ENCODE measurements at regions of chr1 and their contacts with region 1.

Region 1: GRCh38 chr1:24586970-24587820 is 31.3 kb downstream of the NCMAP start:
- DNase-seq: peak in 13 of 14 experiments; percentile 4 to 87 (median 48)
- ATAC-seq: peak; percentile 100
- H3K4me3 ChIP-seq: no peak overlapping the region
- H3K4me3 Mint-ChIP-seq: no peak overlapping the region
- H3K27ac ChIP-seq: no peak overlapping the region
- H3K27ac Mint-ChIP-seq: peak overlapping the region; percentile 66
- H3K4me1 ChIP-seq: peaks cover 3% of the 10 kb centered on the region
- H3K4me1 Mint-ChIP-seq: peaks cover 9% of the 10 kb centered on the region
- H3K27me3 ChIP-seq: no peaks in the 10 kb centered on the region
- H3K27me3 Mint-ChIP-seq: no peaks in the 10 kb centered on the region
- CTCF ChIP-seq: peak; percentile 86

Region 2: DNA sequence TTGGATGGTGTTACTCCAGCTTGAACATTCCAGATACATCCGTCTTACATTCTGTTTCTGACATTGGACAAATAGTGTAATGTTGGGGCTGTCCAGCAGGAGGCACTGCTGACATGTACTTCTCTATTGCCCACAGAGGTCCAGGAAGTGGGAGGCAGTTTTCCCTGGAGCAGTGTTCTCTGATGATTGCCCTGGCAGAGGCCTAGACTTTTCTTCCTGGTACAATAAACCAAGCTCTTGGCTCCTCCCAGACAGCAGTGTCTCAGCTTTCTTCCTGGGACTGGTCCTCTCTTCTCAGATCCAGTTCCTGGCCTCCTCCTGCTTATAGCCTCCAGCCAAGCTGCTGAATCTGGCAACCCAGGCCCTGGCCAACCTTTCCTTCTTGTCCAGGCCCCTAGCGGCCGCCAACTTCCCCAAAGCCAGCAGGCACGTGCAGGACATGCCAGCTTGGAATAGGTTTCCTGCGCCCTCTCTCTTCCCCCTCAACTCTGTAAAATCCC is 385.2 kb before region 1 on chr1:
- CTCF ChIA-PET with region 1: interaction called, 15 read pairs
- POLR2A ChIA-PET with region 1: no interaction called
- intact Hi-C with region 1: loop called (anchors 1 to 2 kb)
- DNase-seq: peak; percentile 30 to 76 (median 47)
- ATAC-seq: peak; percentile 43
- H3K4me3 ChIP-seq: no peak overlapping the region
- H3K4me3 Mint-ChIP-seq: no peak overlapping the region
- H3K27ac ChIP-seq: no peak overlapping the region
- H3K27ac Mint-ChIP-seq: no peak overlapping the region
- H3K4me1 ChIP-seq: peaks cover 8% of the 10 kb centered on the region
- H3K4me1 Mint-ChIP-seq: peaks cover 6% of the 10 kb centered on the region
- H3K27me3 ChIP-seq: peaks cover 0 to 8% of the 10 kb centered on the region in 2 experiments
- H3K27me3 Mint-ChIP-seq: no peaks in the 10 kb centered on the region
- CTCF ChIP-seq: peak; percentile 77

Region 3: DNA sequence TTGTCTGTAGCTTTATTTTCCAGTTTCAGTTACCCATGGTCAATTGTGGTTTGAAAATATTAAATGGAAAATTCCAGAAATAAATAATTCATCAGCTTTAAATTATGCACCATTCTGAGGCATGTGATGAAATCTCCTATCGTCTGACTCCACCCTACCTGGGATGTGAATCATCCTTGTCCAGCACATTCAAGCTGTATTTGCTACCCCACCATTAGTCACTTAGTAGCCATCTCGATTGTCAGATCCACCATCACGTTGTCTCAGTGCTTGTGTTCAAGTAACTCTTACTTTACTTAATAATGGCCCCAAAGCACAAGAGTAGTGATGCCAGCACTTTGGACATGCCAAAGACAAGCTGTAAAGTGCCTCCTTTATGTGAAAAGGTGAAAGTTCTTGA is 177.7 kb before region 1 on chr1:
- CTCF ChIA-PET with region 1: interaction called, 45 read pairs
- POLR2A ChIA-PET with region 1: interaction called, 8 read pairs
- intact Hi-C with region 1: no loop called
- DNase-seq: no peak
- ATAC-seq: no peak
- H3K4me3 ChIP-seq: no peak overlapping the region
- H3K4me3 Mint-ChIP-seq: no peak overlapping the region
- H3K27ac ChIP-seq: no peak overlapping the region
- H3K27ac Mint-ChIP-seq: no peak overlapping the region
- H3K4me1 ChIP-seq: peaks cover 14% of the 10 kb centered on the region
- H3K4me1 Mint-ChIP-seq: peaks cover 27% of the 10 kb centered on the region
- H3K27me3 ChIP-seq: no peaks in the 10 kb centered on the region
- H3K27me3 Mint-ChIP-seq: no peaks in the 10 kb centered on the region
- CTCF ChIP-seq: no peak

Region 4: DNA sequence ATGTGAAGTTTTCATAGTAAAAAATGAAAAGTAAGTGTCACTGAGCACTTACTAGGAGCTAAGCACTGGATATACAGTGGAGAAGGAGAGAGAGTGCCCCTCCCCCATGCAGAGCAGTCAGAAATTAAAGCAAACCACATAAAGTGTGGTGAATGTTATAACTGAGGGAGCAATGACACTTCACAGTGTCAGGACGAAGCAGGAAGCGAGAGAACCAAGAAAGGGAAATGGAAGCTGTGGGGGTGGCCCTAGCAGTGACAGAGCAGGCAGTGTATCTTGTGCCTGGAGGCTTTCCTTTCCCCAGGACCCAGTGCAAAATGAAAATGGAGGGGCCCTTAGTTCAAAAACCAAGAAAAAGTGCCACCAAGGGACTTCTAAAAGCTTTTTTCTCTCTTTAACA is 106.1 kb before region 1 on chr1:
- CTCF ChIA-PET with region 1: interaction called, 22 read pairs
- POLR2A ChIA-PET with region 1: interaction called, 8 read pairs
- intact Hi-C with region 1: no loop called
- DNase-seq: peak in 13 of 14 experiments; percentile 23 to 90 (median 53)
- ATAC-seq: peak; percentile 70
- H3K4me3 ChIP-seq: no peak overlapping the region
- H3K4me3 Mint-ChIP-seq: peak overlapping the region; percentile 90
- H3K27ac ChIP-seq: peak overlapping the region; percentile 25 to 81
- H3K27ac Mint-ChIP-seq: peak overlapping the region; percentile 98
- H3K4me1 ChIP-seq: peaks cover 63% of the 10 kb centered on the region
- H3K4me1 Mint-ChIP-seq: peaks cover 63% of the 10 kb centered on the region
- H3K27me3 ChIP-seq: no peaks in the 10 kb centered on the region
- H3K27me3 Mint-ChIP-seq: no peaks in the 10 kb centered on the region
- CTCF ChIP-seq: no peak

Region 5: DNA sequence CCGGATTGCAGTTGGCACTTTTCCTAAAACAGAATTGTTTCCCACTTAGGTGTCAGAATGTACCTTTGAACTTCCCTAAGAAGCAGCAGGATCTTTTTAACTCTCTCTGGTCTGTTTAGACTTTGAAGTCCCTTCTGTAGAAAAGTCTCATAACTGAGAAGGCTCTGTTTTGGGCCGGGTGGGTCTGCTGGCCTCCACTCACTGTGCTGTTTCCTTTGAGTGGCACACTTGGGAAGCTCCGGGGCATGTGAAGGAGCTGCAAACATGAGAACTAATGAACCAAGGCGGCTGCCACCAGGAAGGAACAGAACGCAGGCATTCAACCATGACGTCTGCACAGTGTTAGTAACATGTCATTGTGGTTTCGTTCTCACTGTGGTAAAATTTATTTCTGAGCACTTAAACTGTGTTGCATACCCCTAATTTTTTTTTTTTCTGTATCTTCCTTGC is 50.8 kb before region 1 on chr1:
- CTCF ChIA-PET with region 1: interaction called, 42 read pairs
- POLR2A ChIA-PET with region 1: interaction called, 5 read pairs
- intact Hi-C with region 1: loop called (anchors 2 to 5 kb)
- DNase-seq: peak; percentile 41 to 94 (median 64)
- ATAC-seq: peak; percentile 80
- H3K4me3 ChIP-seq: no peak overlapping the region
- H3K4me3 Mint-ChIP-seq: peak overlapping the region; percentile 86
- H3K27ac ChIP-seq: peak overlapping the region; percentile 86 to 95
- H3K27ac Mint-ChIP-seq: peak overlapping the region; percentile 96
- H3K4me1 ChIP-seq: peaks cover 43% of the 10 kb centered on the region
- H3K4me1 Mint-ChIP-seq: peaks cover 79% of the 10 kb centered on the region
- H3K27me3 ChIP-seq: no peaks in the 10 kb centered on the region
- H3K27me3 Mint-ChIP-seq: no peaks in the 10 kb centered on the region
- CTCF ChIP-seq: no peak

Region 6: DNA sequence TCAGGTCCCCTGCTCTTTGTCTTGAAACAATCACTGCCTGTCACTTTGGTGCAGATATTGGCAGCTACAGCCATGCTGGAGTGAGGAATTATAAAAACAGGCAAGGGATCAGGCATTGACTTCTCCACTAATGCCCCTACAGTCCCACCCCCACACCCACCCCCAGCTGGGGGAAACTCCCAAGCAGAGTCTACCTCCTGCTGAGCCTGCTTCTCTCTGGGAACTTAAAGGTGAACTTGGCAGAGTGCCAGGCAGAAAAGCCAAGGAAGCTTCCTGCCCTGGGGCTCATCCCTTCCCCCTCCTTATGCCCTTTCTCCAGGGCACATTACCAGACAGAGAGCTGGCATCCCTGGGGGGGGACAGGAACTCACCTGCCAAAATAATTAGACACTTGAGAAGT is 24.6 kb before region 1 on chr1:
- CTCF ChIA-PET with region 1: interaction called, 10 read pairs
- POLR2A ChIA-PET with region 1: interaction called, 3 read pairs
- intact Hi-C with region 1: no loop called
- DNase-seq: no peak
- ATAC-seq: no peak
- H3K4me3 ChIP-seq: no peak overlapping the region
- H3K4me3 Mint-ChIP-seq: no peak overlapping the region
- H3K27ac ChIP-seq: no peak overlapping the region
- H3K27ac Mint-ChIP-seq: no peak overlapping the region
- H3K4me1 ChIP-seq: peaks cover 3% of the 10 kb centered on the region
- H3K4me1 Mint-ChIP-seq: peaks cover 9% of the 10 kb centered on the region
- H3K27me3 ChIP-seq: peaks cover 2 to 6% of the 10 kb centered on the region in 2 experiments
- H3K27me3 Mint-ChIP-seq: peaks cover 5% of the 10 kb centered on the region
- CTCF ChIP-seq: no peak

Region 7: GRCh38 chr1:24648919-24649318 is 61.7 kb after region 1 on chr1:
- CTCF ChIA-PET with region 1: no interaction called
- POLR2A ChIA-PET with region 1: no interaction called
- intact Hi-C with region 1: no loop called
- DNase-seq: no peak
- ATAC-seq: no peak
- H3K4me3 ChIP-seq: no peak overlapping the region
- H3K4me3 Mint-ChIP-seq: no peak overlapping the region
- H3K27ac ChIP-seq: no peak overlapping the region
- H3K27ac Mint-ChIP-seq: no peak overlapping the region
- H3K4me1 ChIP-seq: peaks cover 9% of the 10 kb centered on the region
- H3K4me1 Mint-ChIP-seq: peaks cover 59% of the 10 kb centered on the region
- H3K27me3 ChIP-seq: no peaks in the 10 kb centered on the region
- H3K27me3 Mint-ChIP-seq: no peaks in the 10 kb centered on the region
- CTCF ChIP-seq: no peak

Region 8: DNA sequence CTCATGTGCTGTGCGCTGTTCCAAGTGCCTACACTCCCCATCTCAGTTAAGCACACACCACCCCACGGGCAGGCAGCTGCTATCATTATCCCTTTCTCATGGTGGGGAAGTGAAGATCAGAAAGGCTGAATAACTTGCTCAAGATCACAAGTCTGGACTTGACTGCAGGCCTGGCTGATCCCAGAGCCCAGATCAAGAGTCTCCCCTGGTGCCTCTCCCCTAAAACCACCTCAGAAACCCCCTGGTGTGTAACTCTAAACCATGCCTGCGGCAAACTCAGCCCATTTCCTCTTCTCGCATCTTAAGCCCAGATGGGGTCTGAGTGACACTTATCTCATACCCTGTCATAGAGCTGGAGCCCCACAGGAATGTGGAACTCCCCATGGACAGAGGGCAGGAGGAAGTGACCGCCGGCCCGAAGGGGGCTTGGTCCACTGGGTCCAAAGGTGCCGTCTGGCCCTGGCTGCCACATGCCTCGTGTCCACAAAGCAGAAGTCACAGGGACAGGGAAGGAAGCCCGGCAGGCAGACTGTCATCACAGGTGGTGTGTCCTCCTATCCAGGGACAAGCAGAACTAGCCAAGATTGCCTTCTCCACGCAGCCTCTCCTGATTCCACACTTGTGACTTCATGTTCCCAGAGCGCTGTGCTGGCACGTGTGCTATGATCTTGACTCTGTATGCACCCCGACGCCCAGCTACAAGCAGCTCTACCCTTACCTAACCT is 553.0 kb after region 1 on chr1:
- CTCF ChIA-PET with region 1: no interaction called
- POLR2A ChIA-PET with region 1: no interaction called
- intact Hi-C with region 1: no loop called
- DNase-seq: peak in 3 of 14 experiments; percentile 5 to 70 (median 61)
- ATAC-seq: no peak
- H3K4me3 ChIP-seq: no peak overlapping the region
- H3K4me3 Mint-ChIP-seq: no peak overlapping the region
- H3K27ac ChIP-seq: no peak overlapping the region
- H3K27ac Mint-ChIP-seq: no peak overlapping the region
- H3K4me1 ChIP-seq: no peaks in the 10 kb centered on the region
- H3K4me1 Mint-ChIP-seq: no peaks in the 10 kb centered on the region
- H3K27me3 ChIP-seq: peaks cover 6 to 9% of the 10 kb centered on the region in 2 experiments
- H3K27me3 Mint-ChIP-seq: peaks cover 39% of the 10 kb centered on the region
- CTCF ChIP-seq: no peak